ENCODE measurements at regions of chr20 and their contacts with region 1.

Region 1: GRCh38 chr20:6074145-6074561 is 20.3 kb upstream of the LRRN4 start:
- DNase-seq: peak; percentile 20
- H3K4me3 Mint-ChIP-seq: no peak overlapping the region
- H3K27ac Mint-ChIP-seq: peak overlapping the region; percentile 32
- H3K4me1 Mint-ChIP-seq: no peaks in the 10 kb centered on the region
- H3K27me3 Mint-ChIP-seq: no peaks in the 10 kb centered on the region
- CTCF ChIP-seq: no peak

Region 2: GRCh38 chr20:5806457-5807263 is 267.5 kb before region 1 on chr20:
- CTCF ChIA-PET with region 1: interaction called, 4 read pairs
- POLR2A ChIA-PET with region 1: no interaction called
- intact Hi-C with region 1: loop called (anchors 5 kb)
- DNase-seq: no peak
- H3K4me3 Mint-ChIP-seq: no peak overlapping the region
- H3K27ac Mint-ChIP-seq: no peak overlapping the region
- H3K4me1 Mint-ChIP-seq: no peaks in the 10 kb centered on the region
- H3K27me3 Mint-ChIP-seq: no peaks in the 10 kb centered on the region
- CTCF ChIP-seq: peak; percentile 27

Region 3: GRCh38 chr20:6008254-6008653 is 65.9 kb before region 1 on chr20:
- CTCF ChIA-PET with region 1: interaction called, 7 read pairs
- POLR2A ChIA-PET with region 1: interaction called, 4 read pairs
- intact Hi-C with region 1: loop called (anchors 1 kb)
- DNase-seq: peak; percentile 99
- H3K4me3 Mint-ChIP-seq: peak overlapping the region; percentile 76
- H3K27ac Mint-ChIP-seq: peak overlapping the region; percentile 83
- H3K4me1 Mint-ChIP-seq: peaks cover 21% of the 10 kb centered on the region
- H3K27me3 Mint-ChIP-seq: no peaks in the 10 kb centered on the region
- CTCF ChIP-seq: no peak

Region 4: GRCh38 chr20:6053776-6054688 is 20.1 kb before region 1 on chr20 and contains the start of gene LRRN4:
- CTCF ChIA-PET with region 1: interaction called, 11 read pairs
- POLR2A ChIA-PET with region 1: interaction called, 4 read pairs
- intact Hi-C with region 1: no loop called
- DNase-seq: peak; percentile 84
- H3K4me3 Mint-ChIP-seq: peak within 1 kb of the TSS; percentile 51
- H3K27ac Mint-ChIP-seq: peak within 1 kb of the TSS; percentile 73
- H3K4me1 Mint-ChIP-seq: peaks cover 23% of the 10 kb centered on the region
- H3K27me3 Mint-ChIP-seq: no peaks in the 10 kb centered on the region
- CTCF ChIP-seq: no peak
- total RNA-seq, gene LRRN4: not detected in 2 replicates

Region 5: DNA sequence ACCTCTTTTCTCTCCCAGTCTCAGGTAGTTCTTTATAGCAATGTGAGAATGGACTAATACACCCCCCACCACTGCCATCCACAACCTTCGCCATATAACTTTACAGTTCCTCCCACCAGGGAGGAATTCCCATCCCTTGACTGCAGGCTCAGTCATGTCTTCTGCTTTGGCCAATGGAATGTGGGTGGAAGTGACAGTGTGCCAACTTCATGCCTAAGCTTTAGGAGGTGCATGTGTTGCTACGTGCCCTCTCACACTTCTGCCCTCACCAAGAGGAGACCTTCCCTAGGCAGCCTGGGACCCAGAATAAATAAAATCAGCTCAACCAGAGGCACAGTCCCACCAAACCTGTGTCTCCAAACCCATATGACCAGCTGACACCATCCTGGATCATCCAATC is 12.7 kb after region 1 on chr20:
- CTCF ChIA-PET with region 1: interaction called, 10 read pairs
- POLR2A ChIA-PET with region 1: no interaction called
- intact Hi-C with region 1: no loop called
- DNase-seq: peak; percentile 38
- H3K4me3 Mint-ChIP-seq: no peak overlapping the region
- H3K27ac Mint-ChIP-seq: no peak overlapping the region
- H3K4me1 Mint-ChIP-seq: peaks cover 14% of the 10 kb centered on the region
- H3K27me3 Mint-ChIP-seq: no peaks in the 10 kb centered on the region
- CTCF ChIP-seq: no peak

Region 6: GRCh38 chr20:6148073-6148472 is 73.9 kb after region 1 on chr20:
- CTCF ChIA-PET with region 1: no interaction called
- POLR2A ChIA-PET with region 1: no interaction called
- intact Hi-C with region 1: no loop called
- DNase-seq: no peak
- H3K4me3 Mint-ChIP-seq: no peak overlapping the region
- H3K27ac Mint-ChIP-seq: no peak overlapping the region
- H3K4me1 Mint-ChIP-seq: no peaks in the 10 kb centered on the region
- H3K27me3 Mint-ChIP-seq: no peaks in the 10 kb centered on the region
- CTCF ChIP-seq: no peak